Caco-2 (cell line): ENCODE measurements at regions of chr2 and their contacts with region 1.

Region 1: DNA sequence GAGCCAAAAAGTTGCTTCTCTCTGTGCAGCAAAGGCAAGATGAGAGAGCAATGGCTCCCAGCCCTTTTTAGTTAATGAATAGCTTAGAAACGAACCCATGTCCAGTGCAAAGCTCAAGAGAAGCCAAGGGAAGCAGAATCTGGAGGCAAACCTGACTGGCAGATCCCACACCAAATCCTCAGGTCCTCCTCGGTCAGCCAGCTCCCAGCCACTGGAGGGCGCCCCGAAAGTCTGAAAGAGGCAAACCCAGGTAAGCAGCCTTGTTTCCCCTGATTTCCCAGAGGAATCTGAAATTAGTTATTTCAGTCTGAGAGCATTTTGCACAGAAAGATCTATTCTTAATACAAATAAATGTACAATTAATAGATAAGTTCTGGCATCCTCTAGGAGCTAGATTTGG is 71.3 kb upstream of the PID1 start:
- DNase-seq: peak; percentile 53 to 54
- H3K4me3 ChIP-seq: no peak overlapping the region
- H3K4me3 Mint-ChIP-seq: no peak overlapping the region
- H3K27ac Mint-ChIP-seq: no peak overlapping the region
- H3K4me1 ChIP-seq: no peaks in the 10 kb centered on the region
- H3K4me1 Mint-ChIP-seq: no peaks in the 10 kb centered on the region
- H3K27me3 ChIP-seq: no peaks in the 10 kb centered on the region
- H3K27me3 Mint-ChIP-seq: peaks cover 5% of the 10 kb centered on the region
- CTCF ChIP-seq: peak; percentile 33 to 61

Region 2: GRCh38 chr2:229133155-229133772 is 209.1 kb before region 1 on chr2:
- CTCF ChIA-PET with region 1: no interaction called
- POLR2A ChIA-PET with region 1: no interaction called
- intact Hi-C with region 1: loop called (anchors 5 kb)
- DNase-seq: peak in 1 of 2 experiments; percentile 54
- H3K4me3 ChIP-seq: no peak overlapping the region
- H3K4me3 Mint-ChIP-seq: no peak overlapping the region
- H3K27ac Mint-ChIP-seq: no peak overlapping the region
- H3K4me1 ChIP-seq: no peaks in the 10 kb centered on the region
- H3K4me1 Mint-ChIP-seq: no peaks in the 10 kb centered on the region
- H3K27me3 ChIP-seq: no peaks in the 10 kb centered on the region
- H3K27me3 Mint-ChIP-seq: no peaks in the 10 kb centered on the region
- CTCF ChIP-seq: peak; percentile 36 to 46

Region 3: GRCh38 chr2:229572507-229573271 is 230.3 kb after region 1 on chr2:
- CTCF ChIA-PET with region 1: no interaction called
- POLR2A ChIA-PET with region 1: no interaction called
- intact Hi-C with region 1: no loop called
- DNase-seq: no peak
- H3K4me3 ChIP-seq: no peak overlapping the region
- H3K4me3 Mint-ChIP-seq: no peak overlapping the region
- H3K27ac Mint-ChIP-seq: no peak overlapping the region
- H3K4me1 ChIP-seq: no peaks in the 10 kb centered on the region
- H3K4me1 Mint-ChIP-seq: no peaks in the 10 kb centered on the region
- H3K27me3 ChIP-seq: no peaks in the 10 kb centered on the region
- H3K27me3 Mint-ChIP-seq: peaks cover 14% of the 10 kb centered on the region
- CTCF ChIP-seq: no peak